CD8-positive, alpha-beta memory T cell (primary cell): ENCODE measurements at regions of chr7 and their contacts with region 1.

Region 1: GRCh38 chr7:91866599-91867148 is 13.8 kb downstream of the MTERF1 start:
- DNase-seq: no peak
- H3K4me3 ChIP-seq: no peak overlapping the region
- H3K4me3 Mint-ChIP-seq: no peak overlapping the region
- H3K27ac ChIP-seq: no peak overlapping the region
- H3K27ac Mint-ChIP-seq: peak overlapping the region in 2 of 8 donors; percentile 53 to 75
- H3K4me1 ChIP-seq: no peaks in the 10 kb centered on the region
- H3K4me1 Mint-ChIP-seq: peaks cover 15 to 29% (median 22%) of the 10 kb centered on the region in 3 donors
- H3K27me3 ChIP-seq: no peaks in the 10 kb centered on the region
- H3K27me3 Mint-ChIP-seq: no peaks in the 10 kb centered on the region

Region 2: GRCh38 chr7:91880413-91881241 is 14.0 kb after region 1 on chr7 and contains the start of gene MTERF1:
- CTCF ChIA-PET with region 1: interaction called, 9 read pairs
- POLR2A ChIA-PET with region 1: interaction called, 10 read pairs
- DNase-seq: peak; percentile 88 to 93 (median 89)
- H3K4me3 ChIP-seq: peak within 1 kb of the TSS; percentile 98
- H3K4me3 Mint-ChIP-seq: peak within 1 kb of the TSS; percentile 93 to 99 (median 95)
- H3K27ac ChIP-seq: peak within 1 kb of the TSS; percentile 72
- H3K27ac Mint-ChIP-seq: peak within 1 kb of the TSS; percentile 53 to 98 (median 96)
- H3K4me1 ChIP-seq: peaks cover 20% of the 10 kb centered on the region
- H3K4me1 Mint-ChIP-seq: peaks cover 37 to 50% (median 50%) of the 10 kb centered on the region in 3 donors
- H3K27me3 ChIP-seq: no peaks in the 10 kb centered on the region
- H3K27me3 Mint-ChIP-seq: no peaks in the 10 kb centered on the region
- total RNA-seq, gene MTERF1: 20.4 to 21.4 TPM

Region 3: GRCh38 chr7:91973639-91974038 is 107.0 kb after region 1 on chr7:
- CTCF ChIA-PET with region 1: no interaction called
- POLR2A ChIA-PET with region 1: no interaction called
- DNase-seq: no peak
- H3K4me3 ChIP-seq: no peak overlapping the region
- H3K4me3 Mint-ChIP-seq: no peak overlapping the region
- H3K27ac ChIP-seq: no peak overlapping the region
- H3K27ac Mint-ChIP-seq: peak overlapping the region in 1 of 8 donors; percentile 19
- H3K4me1 ChIP-seq: peaks cover 8% of the 10 kb centered on the region
- H3K4me1 Mint-ChIP-seq: peaks cover 34 to 51% (median 41%) of the 10 kb centered on the region in 3 donors
- H3K27me3 ChIP-seq: no peaks in the 10 kb centered on the region
- H3K27me3 Mint-ChIP-seq: no peaks in the 10 kb centered on the region